Colonic mucosa (tissue), 4 donors: ENCODE measurements at regions of chr2 and their contacts with region 1.

Region 1: GRCh38 chr2:29990129-29990528 is 68.7 kb upstream of the ALK start:
- DNase-seq: no peak
- H3K4me3 ChIP-seq: no peak overlapping the region
- H3K27ac ChIP-seq: no peak overlapping the region
- H3K4me1 ChIP-seq: no peaks in the 10 kb centered on the region
- H3K27me3 ChIP-seq: no peaks in the 10 kb centered on the region
- CTCF ChIP-seq: no peak

Region 2: GRCh38 chr2:29596584-29596983 is 393.5 kb before region 1 on chr2:
- intact Hi-C with region 1: loop called (anchors 5 kb)
- DNase-seq: no peak
- H3K4me3 ChIP-seq: no peak overlapping the region
- H3K27ac ChIP-seq: no peak overlapping the region
- H3K4me1 ChIP-seq: no peaks in the 10 kb centered on the region
- H3K27me3 ChIP-seq: no peaks in the 10 kb centered on the region
- CTCF ChIP-seq: no peak

Region 3: DNA sequence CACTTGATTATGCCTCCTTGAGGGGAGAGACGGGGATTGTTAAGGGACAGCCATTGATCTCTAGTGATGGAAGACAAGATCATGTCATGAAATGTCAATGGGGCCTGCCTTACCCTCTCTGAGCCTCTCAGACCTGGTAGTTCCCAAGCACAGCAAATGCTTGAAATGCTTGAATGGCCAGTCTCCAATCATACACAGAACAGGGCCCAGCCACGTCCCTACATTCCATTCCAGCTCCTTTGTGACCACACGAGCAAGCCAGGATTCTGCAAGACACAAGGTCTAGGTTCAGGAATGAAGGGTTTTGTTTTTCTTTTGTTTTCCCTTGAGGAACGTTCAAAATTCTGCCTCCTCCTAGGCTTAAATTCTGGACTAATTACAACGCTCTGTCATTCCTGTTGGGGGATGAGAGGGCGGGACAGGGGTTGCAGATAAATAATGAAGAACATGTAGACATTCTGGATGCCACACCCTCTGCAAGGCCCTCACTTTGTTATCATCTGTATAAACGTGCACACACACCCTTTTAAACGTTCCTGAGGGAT is 58.6 kb after region 1 on chr2:
- intact Hi-C with region 1: no loop called
- DNase-seq: no peak
- H3K4me3 ChIP-seq: no peak overlapping the region
- H3K27ac ChIP-seq: no peak overlapping the region
- H3K4me1 ChIP-seq: no peaks in the 10 kb centered on the region
- H3K27me3 ChIP-seq: no peaks in the 10 kb centered on the region
- CTCF ChIP-seq: no peak